ENCODE measurements at regions of chr18 and their contacts with region 1.

Region 1: DNA sequence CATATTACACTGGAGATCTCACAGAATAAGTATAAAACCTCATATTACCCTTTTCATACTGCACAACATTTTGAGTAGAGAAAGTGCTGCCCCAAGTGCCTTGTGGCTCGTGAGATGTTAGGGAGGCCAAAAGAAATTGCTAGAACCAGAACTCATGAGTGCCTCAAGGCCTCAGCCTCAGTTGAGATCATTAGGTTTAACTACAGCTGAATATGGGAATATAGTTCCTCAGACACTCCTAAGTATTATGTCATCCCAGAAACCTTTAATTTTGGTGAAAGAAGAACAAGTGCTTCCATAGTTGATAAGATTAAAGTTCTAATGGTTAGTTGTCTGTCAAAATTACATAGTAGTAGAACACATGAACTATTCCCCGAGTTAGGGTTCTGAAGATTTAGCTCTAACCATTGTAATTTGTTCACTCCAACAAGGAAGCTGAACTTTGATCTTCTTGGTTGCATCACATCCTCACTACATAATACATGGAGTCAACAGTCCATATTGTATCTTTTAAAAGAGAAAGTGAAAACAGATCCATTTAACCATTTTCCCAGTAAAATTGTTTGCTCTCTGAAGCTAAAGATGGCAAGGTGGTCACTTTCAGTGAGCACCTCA is 9.6 kb upstream of the AQP4 start:
- DNase-seq: peak; percentile 6
- H3K4me3 Mint-ChIP-seq: no peak overlapping the region
- H3K27ac Mint-ChIP-seq: no peak overlapping the region
- H3K4me1 Mint-ChIP-seq: peaks cover 22% of the 10 kb centered on the region
- H3K27me3 Mint-ChIP-seq: no peaks in the 10 kb centered on the region
- CTCF ChIP-seq: no peak

Region 2: DNA sequence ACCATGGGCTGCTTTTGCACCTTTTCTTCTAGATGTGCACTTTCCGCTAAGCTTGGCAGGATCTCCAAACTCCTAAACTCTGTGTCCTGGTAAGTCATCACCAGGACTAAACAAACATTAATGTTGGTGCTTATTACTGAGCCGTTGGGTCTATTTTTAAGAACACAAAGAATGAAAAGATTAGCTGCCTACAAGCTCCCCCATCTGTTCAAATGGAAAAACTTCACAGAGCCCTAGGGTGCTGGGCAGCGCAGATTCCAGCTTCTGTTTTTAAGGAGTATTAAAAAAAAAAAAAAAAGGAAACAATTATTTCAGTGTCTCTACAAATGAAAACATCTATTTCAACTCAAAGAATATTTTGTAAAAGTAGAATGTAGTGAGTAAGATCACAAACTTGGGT is 88.1 kb after region 1 on chr18:
- CTCF ChIA-PET with region 1: no interaction called
- intact Hi-C with region 1: loop called (anchors 5 kb)
- DNase-seq: no peak
- H3K4me3 Mint-ChIP-seq: no peak overlapping the region
- H3K27ac Mint-ChIP-seq: no peak overlapping the region
- H3K4me1 Mint-ChIP-seq: no peaks in the 10 kb centered on the region
- H3K27me3 Mint-ChIP-seq: no peaks in the 10 kb centered on the region
- CTCF ChIP-seq: no peak